ENCODE measurements at regions of chr9 and their contacts with region 1.

Region 1: DNA sequence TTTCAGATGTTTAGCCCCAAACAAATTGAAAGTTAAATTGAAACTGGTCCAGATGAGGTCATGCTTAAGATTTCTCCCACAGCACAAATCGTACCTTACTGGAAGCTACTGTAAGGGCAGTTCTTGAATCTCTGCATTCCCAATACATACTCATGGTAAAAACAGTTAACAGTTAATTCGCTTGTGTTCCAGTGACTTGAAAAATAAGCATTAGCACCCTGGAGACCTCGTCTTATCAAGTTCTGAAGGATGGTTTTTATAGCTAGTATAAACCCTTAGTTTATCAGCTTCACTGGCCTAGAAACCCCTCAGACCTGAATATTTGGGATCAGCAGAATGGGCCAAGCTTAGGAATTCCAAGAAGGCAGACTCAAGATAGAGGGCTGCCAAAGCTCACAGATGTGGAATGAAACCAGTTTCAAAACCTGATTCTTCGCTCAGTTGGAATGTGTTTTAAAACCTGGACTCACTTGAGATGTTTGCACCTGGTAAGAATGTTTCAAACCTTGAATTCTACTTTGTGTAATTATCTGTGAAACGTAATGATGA is 103.6 kb downstream of the C9orf152 start:
- DNase-seq: peak; percentile 19 to 76
- H3K4me3 ChIP-seq: no peak overlapping the region
- H3K27ac ChIP-seq: peak overlapping the region; percentile 52
- H3K4me1 ChIP-seq: peaks cover 33% of the 10 kb centered on the region
- H3K27me3 ChIP-seq: no peaks in the 10 kb centered on the region
- CTCF ChIP-seq: no peak

Region 2: DNA sequence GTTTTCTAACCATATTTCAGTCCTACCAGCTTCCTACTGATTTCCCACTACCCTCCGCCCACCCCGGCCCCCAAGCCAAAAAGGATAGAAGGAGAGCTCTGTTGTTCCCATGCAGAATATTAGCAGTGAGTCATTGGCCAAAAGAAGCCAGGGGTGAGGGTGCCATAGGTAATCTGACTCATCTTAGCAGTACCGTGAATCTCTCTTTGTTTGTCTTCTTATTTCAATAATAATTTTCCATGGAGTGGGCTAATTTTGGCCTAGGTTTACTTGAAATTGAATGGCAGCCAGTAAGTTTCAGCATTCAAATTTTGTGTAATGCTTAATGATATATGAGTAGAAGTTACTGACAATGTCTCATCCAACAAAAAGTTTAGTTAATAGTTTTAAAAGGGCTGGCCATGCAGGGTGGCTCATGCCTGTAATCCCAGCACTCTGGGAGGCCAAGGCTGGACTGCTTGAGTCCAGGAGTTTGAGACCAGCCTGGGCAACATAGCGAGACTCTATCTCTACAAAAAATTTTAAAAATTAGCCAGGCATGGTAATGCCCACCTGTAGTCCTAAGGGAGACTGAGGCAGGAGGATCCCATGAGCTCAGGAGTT is 29.4 kb after region 1 on chr9:
- CTCF ChIA-PET with region 1: no interaction called
- POLR2A ChIA-PET with region 1: interaction called, 4 read pairs
- intact Hi-C with region 1: loop called (anchors 1 kb)
- DNase-seq: peak; percentile 49 to 90
- H3K4me3 ChIP-seq: no peak overlapping the region
- H3K27ac ChIP-seq: peak overlapping the region; percentile 93
- H3K4me1 ChIP-seq: peaks cover 71% of the 10 kb centered on the region
- H3K27me3 ChIP-seq: no peaks in the 10 kb centered on the region
- CTCF ChIP-seq: no peak